MCF 10A (cell line): ENCODE measurements at regions of chr14 and their contacts with region 1.

Region 1: GRCh38 chr14:60734465-60735242 is at the start of gene MNAT1:
- DNase-seq: peak; percentile 82
- H3K4me3 Mint-ChIP-seq: peak within 1 kb of the TSS; percentile 94
- H3K27ac Mint-ChIP-seq: peak within 1 kb of the TSS; percentile 92
- H3K4me1 Mint-ChIP-seq: peaks cover 19% of the 10 kb centered on the region
- H3K27me3 Mint-ChIP-seq: no peaks in the 10 kb centered on the region
- CTCF ChIP-seq: no peak
- total RNA-seq, gene MNAT1: 45.2 and 57.5 TPM in 2 replicates

Region 2: GRCh38 chr14:60599727-60600126 is 134.9 kb before region 1 on chr14:
- CTCF ChIA-PET with region 1: no interaction called
- POLR2A ChIA-PET with region 1: no interaction called
- intact Hi-C with region 1: no loop called
- DNase-seq: no peak
- H3K4me3 Mint-ChIP-seq: no peak overlapping the region
- H3K27ac Mint-ChIP-seq: no peak overlapping the region
- H3K4me1 Mint-ChIP-seq: no peaks in the 10 kb centered on the region
- H3K27me3 Mint-ChIP-seq: peaks cover 22% of the 10 kb centered on the region
- CTCF ChIP-seq: no peak

Region 3: DNA sequence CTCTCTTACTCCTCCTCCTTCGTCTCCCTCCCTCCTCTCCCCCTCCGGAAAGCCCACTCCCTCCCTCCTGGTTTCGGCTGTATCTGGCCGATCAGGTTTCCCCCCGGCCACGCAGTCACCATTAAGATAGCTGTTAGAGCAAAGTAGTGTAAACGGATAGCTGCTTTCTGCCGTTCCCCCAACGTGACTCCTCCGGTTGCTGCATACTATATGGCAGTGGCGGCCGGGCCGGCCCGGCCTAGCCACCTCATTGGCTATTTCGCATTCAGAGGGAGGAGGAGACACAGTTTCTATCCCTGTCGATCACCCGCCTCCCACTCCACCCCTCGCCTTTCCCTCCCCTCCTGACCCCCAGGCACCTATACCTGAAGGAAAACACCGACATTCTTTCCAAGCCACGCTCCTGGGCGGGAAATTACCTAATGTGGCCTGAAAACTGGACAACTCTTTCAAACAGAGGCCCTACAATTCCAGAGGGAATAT is 10.5 kb before region 1 on chr14 and contains the start of gene SIX4:
- CTCF ChIA-PET with region 1: interaction called, 15 read pairs
- POLR2A ChIA-PET with region 1: interaction called, 35 read pairs
- intact Hi-C with region 1: no loop called
- DNase-seq: peak; percentile 89
- H3K4me3 Mint-ChIP-seq: peak within 1 kb of the TSS; percentile 91
- H3K27ac Mint-ChIP-seq: peak within 1 kb of the TSS; percentile 80
- H3K4me1 Mint-ChIP-seq: no peaks in the 10 kb centered on the region
- H3K27me3 Mint-ChIP-seq: no peaks in the 10 kb centered on the region
- CTCF ChIP-seq: no peak
- total RNA-seq, gene SIX4: 12.9 and 13.6 TPM in 2 replicates

Region 4: DNA sequence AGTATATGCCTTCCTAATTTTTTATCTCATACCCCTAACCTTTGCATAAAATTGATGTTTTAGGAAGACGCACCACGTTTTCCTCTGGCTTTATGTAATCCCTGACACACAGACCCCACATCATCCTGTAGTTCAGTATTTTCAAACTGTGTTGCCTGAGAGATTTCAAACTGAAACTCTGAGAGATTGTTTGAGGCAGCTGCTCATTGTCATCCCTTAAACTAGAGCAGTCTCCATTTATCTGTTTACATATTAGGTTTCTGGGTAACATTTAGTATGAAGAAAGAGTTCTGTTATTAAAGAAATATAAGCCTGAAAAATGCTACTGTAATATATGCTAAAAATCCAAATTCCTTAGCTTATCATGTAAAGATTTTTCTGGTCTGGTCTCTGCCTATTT is 24.2 kb after region 1 on chr14:
- CTCF ChIA-PET with region 1: interaction called, 4 read pairs
- POLR2A ChIA-PET with region 1: interaction called, 21 read pairs
- intact Hi-C with region 1: no loop called
- DNase-seq: no peak
- H3K4me3 Mint-ChIP-seq: no peak overlapping the region
- H3K27ac Mint-ChIP-seq: peak overlapping the region; percentile 94
- H3K4me1 Mint-ChIP-seq: peaks cover 47% of the 10 kb centered on the region
- H3K27me3 Mint-ChIP-seq: no peaks in the 10 kb centered on the region
- CTCF ChIP-seq: no peak

Region 5: DNA sequence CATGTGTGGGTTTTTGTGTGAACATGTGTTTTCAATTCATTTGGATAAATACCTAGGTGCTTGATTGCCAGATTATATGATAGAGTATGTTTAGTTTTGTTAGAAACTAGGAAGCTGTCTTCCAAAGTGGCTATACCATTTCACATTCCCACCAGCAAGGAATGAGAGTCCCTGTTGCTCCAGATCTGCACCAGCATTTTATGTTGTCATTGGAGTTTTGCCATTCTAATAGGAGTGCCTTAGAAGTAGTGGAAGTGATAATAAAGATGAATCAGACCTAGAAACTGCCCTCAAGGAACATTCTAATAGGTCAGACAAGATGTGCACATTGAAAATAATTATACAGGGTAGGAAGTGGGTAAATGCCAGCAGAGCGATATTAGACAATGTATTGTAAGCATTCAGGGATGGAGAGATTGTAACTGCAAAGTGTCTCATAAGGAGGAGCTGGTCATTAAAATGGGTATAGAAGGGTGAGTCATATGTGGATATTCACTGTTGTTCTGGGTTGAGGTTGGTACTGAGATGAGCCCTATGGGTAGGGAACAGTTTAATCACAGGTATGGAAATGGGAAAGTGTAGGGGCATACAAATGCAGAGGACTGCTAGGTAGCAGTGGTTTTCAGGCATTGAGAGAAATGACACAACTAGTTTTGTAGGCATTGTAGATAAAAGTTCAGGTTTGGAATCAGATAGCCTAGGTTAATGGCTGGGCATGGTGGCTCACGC is 71.4 kb after region 1 on chr14:
- CTCF ChIA-PET with region 1: interaction called, 3 read pairs
- POLR2A ChIA-PET with region 1: no interaction called
- intact Hi-C with region 1: loop called (anchors 10 kb)
- DNase-seq: peak; percentile 67
- H3K4me3 Mint-ChIP-seq: no peak overlapping the region
- H3K27ac Mint-ChIP-seq: peak overlapping the region; percentile 2
- H3K4me1 Mint-ChIP-seq: peaks cover 20% of the 10 kb centered on the region
- H3K27me3 Mint-ChIP-seq: no peaks in the 10 kb centered on the region
- CTCF ChIP-seq: no peak